GM18951 (cell line): ENCODE measurements at regions of chr7 and their contacts with region 1.

Region 1: GRCh38 chr7:20798081-20798693 is 11.5 kb upstream of the SP8 start:
- POLR2A ChIP-seq: no peak

Region 2: GRCh38 chr7:21507626-21508343 is 709.6 kb after region 1 on chr7:
- in situ Hi-C with region 1: loop called (anchors 25 kb)
- POLR2A ChIP-seq: no peak